Colonic mucosa (tissue), 4 donors: ENCODE measurements at regions of chr16 and their contacts with region 1.

Region 1: GRCh38 chr16:67279296-67280089 is at the start of gene PLEKHG4:
- DNase-seq: peak; percentile 80
- H3K4me3 ChIP-seq: peak within 1 kb of the TSS; percentile 63
- H3K27ac ChIP-seq: peak within 1 kb of the TSS; percentile 48
- H3K4me1 ChIP-seq: no peaks in the 10 kb centered on the region
- H3K27me3 ChIP-seq: no peaks in the 10 kb centered on the region
- CTCF ChIP-seq: no peak
- total RNA-seq, gene PLEKHG4: 13.1 to 14.7 TPM

Region 2: DNA sequence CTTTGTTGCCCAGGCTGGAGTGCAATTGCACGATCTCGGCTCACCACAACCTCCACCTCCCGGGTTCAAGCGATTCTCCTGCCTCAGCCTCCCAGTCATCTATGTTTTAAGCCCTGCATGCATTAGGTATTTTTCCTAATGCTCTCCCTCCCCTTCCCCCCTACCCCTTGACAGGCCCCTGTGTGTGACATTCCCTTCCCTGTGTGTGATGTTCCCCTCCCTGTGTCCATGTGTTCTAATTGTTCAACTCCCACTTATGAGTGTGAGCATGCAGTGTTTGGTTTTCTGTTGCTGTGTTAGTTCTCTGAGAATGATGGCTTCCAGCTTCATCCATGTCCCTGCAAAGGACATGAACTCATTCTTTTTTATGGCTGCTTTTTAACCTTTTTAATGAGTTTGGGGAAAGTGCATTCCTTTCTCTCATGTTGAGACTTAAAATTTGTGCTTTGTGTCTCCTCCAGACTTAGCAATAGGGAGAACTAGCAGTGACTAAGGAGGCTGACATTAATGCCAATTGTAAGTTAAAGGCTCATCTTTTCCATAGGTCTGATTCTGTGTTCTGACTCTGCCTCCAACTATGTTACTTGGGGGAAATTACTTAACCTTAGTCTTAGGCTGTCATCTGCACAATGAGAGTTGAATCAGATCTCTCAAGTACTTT is 187.5 kb before region 1 on chr16:
- intact Hi-C with region 1: no loop called
- DNase-seq: no peak
- H3K4me3 ChIP-seq: no peak overlapping the region
- H3K27ac ChIP-seq: no peak overlapping the region
- H3K4me1 ChIP-seq: no peaks in the 10 kb centered on the region
- H3K27me3 ChIP-seq: no peaks in the 10 kb centered on the region
- CTCF ChIP-seq: no peak

Region 3: DNA sequence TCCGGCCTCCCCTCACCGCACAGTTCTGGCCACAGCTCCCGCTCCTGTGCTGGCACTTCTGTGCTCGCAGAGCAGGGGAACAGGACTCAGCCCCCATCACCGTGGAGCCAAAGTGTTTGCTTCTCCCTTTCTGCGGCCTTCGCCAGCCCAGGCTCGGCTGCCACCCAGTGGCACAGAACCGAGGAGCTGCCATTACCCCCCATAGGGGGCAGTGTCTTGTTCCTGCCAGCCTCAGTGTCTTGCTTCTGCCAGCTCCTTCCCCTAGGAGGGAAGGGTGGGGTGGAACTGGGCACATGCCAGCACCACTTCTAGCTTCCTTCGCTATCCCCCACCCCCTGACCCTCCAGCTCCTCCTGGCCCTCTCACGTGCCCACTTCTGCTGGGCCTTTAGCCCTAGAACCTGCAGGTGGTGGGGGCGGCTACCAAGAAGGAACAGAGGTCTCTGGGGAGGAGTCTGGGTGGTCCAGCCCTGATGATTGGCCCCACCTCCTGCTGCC is 81.2 kb before region 1 on chr16:
- intact Hi-C with region 1: loop called (anchors 5 kb)
- DNase-seq: peak; percentile 80
- H3K4me3 ChIP-seq: no peak overlapping the region
- H3K27ac ChIP-seq: peak overlapping the region; percentile 96
- H3K4me1 ChIP-seq: peaks cover 6% of the 10 kb centered on the region
- H3K27me3 ChIP-seq: no peaks in the 10 kb centered on the region
- CTCF ChIP-seq: peak; percentile 69

Region 4: GRCh38 chr16:67415872-67416793 is 136.6 kb after region 1 on chr16 and contains the start of gene ZDHHC1:
- intact Hi-C with region 1: loop called (anchors 10 kb)
- DNase-seq: peak; percentile 73
- H3K4me3 ChIP-seq: peak within 1 kb of the TSS; percentile 77
- H3K27ac ChIP-seq: peak within 1 kb of the TSS; percentile 62
- H3K4me1 ChIP-seq: no peaks in the 10 kb centered on the region
- H3K27me3 ChIP-seq: no peaks in the 10 kb centered on the region
- CTCF ChIP-seq: peak; percentile 61
- total RNA-seq, gene ZDHHC1: 7.9 to 8.7 TPM